ENCODE measurements at regions of chr6 and their contacts with region 1.

Region 1: DNA sequence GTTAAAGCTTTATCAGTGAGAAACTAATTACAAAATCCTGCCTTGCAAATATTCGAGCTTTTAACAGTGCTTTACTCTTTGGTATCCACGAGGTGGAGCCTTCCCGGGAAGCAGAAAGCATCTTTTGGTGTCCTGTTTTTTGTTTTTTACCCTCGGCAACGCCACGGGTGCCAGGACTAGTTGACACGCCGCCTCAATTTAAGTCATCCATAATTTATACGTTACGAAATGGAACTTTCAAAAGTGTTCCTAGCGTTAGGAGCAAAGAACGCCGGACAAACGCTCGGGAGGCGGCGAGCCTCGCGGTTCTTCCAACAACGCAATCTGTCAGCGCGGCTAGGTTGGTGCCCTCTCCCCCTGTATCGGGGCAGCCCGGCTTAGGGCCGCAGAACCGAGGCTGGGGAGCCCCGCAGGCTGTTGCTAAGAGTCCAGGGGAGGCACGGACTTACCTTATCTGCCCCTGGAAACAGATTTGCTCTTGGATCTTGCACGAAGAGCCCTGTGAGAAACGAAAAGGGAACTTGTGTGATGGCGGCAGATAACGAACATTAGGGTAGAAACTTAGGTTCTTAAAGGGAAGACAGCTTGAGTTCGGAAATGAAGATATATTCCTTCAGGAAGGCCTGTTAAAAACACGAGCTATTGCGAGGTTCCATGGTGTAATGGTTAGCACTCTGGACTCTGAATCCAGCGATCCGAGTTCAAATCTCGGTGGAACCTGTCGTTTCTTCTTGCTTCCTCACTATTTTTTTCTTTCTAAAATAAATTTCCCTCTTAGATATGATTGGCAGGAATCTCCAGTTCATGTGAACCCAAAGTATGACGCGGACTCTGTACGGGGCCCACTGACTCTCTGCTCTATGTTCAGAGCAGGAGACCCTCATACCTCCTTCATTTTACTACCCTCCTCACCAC is 46.2 kb upstream of the ZNF184 start:
- DNase-seq: peak; percentile 55 to 80 (median 59)
- ATAC-seq: peak; percentile 89
- H3K4me3 ChIP-seq: peak overlapping the region; percentile 21
- H3K4me1 ChIP-seq: peaks cover 5% of the 10 kb centered on the region
- CTCF ChIP-seq: peak; percentile 38

Region 2: GRCh38 chr6:27593200-27593818 is 74.2 kb after region 1 on chr6:
- intact Hi-C with region 1: no loop called
- DNase-seq: no peak
- ATAC-seq: no peak
- H3K4me3 ChIP-seq: no peak overlapping the region
- H3K4me1 ChIP-seq: peaks cover 3% of the 10 kb centered on the region
- CTCF ChIP-seq: no peak

Region 3: GRCh38 chr6:27753668-27754407 is 234.7 kb after region 1 on chr6:
- intact Hi-C with region 1: loop called in 1 of 2 experiments (anchors 10 kb)
- DNase-seq: peak; percentile 68 to 85 (median 78)
- ATAC-seq: peak; percentile 53
- H3K4me3 ChIP-seq: no peak overlapping the region
- H3K4me1 ChIP-seq: peaks cover 12% of the 10 kb centered on the region
- CTCF ChIP-seq: no peak

Region 4: GRCh38 chr6:27761391-27761790 is 242.3 kb after region 1 on chr6:
- intact Hi-C with region 1: loop called (anchors 10 kb)
- DNase-seq: no peak
- ATAC-seq: no peak
- H3K4me3 ChIP-seq: no peak overlapping the region
- H3K4me1 ChIP-seq: peaks cover 7% of the 10 kb centered on the region
- CTCF ChIP-seq: no peak

Measured in mucosa of descending colon (tissue), 3 donors.